PC-9 (cell line): ENCODE measurements at regions of chr3 and their contacts with region 1.

Region 1: GRCh38 chr3:190384241-190384863 is 3.6 kb upstream of the CLDN16 start:
- DNase-seq: peak; percentile 64 to 67
- H3K4me3 ChIP-seq: no peak overlapping the region
- H3K27ac ChIP-seq: peak overlapping the region; percentile 96
- H3K4me1 ChIP-seq: peaks cover 52% of the 10 kb centered on the region
- H3K27me3 ChIP-seq: no peaks in the 10 kb centered on the region
- CTCF ChIP-seq: peak; percentile 49; the same call in 1 of the 2 replicates

Region 2: GRCh38 chr3:189967254-189967865 is 417.0 kb before region 1 on chr3:
- CTCF ChIA-PET with region 1: no interaction called
- POLR2A ChIA-PET with region 1: no interaction called
- intact Hi-C with region 1: loop called (anchors 1 kb)
- DNase-seq: peak; percentile 37 to 59
- H3K4me3 ChIP-seq: no peak overlapping the region
- H3K27ac ChIP-seq: no peak overlapping the region
- H3K4me1 ChIP-seq: no peaks in the 10 kb centered on the region
- H3K27me3 ChIP-seq: no peaks in the 10 kb centered on the region
- CTCF ChIP-seq: peak; percentile 98

Region 3: DNA sequence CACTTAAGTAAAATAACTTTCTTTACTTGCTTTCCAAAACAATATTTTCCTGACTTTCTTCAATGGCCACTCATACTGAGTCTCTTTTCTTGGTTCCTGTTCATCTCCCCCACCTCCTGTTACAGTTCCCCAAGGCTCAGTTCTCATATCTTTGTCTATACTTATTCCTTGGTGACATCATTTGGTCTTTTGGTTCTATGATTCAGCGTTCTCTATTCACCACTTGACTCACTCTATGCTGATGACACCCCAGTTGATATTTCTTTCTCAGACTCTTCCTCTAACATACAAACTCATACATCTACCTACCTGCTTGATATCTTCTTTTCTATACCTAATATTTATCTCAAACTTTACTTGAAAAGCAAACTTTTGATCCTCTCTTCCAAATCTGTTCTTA is 178.6 kb before region 1 on chr3:
- CTCF ChIA-PET with region 1: no interaction called
- POLR2A ChIA-PET with region 1: no interaction called
- intact Hi-C with region 1: loop called (anchors 1 kb)
- DNase-seq: no peak
- H3K4me3 ChIP-seq: no peak overlapping the region
- H3K27ac ChIP-seq: no peak overlapping the region
- H3K4me1 ChIP-seq: peaks cover 4% of the 10 kb centered on the region; the same call in 1 of the 2 replicates
- H3K27me3 ChIP-seq: no peaks in the 10 kb centered on the region
- CTCF ChIP-seq: no peak

Region 4: DNA sequence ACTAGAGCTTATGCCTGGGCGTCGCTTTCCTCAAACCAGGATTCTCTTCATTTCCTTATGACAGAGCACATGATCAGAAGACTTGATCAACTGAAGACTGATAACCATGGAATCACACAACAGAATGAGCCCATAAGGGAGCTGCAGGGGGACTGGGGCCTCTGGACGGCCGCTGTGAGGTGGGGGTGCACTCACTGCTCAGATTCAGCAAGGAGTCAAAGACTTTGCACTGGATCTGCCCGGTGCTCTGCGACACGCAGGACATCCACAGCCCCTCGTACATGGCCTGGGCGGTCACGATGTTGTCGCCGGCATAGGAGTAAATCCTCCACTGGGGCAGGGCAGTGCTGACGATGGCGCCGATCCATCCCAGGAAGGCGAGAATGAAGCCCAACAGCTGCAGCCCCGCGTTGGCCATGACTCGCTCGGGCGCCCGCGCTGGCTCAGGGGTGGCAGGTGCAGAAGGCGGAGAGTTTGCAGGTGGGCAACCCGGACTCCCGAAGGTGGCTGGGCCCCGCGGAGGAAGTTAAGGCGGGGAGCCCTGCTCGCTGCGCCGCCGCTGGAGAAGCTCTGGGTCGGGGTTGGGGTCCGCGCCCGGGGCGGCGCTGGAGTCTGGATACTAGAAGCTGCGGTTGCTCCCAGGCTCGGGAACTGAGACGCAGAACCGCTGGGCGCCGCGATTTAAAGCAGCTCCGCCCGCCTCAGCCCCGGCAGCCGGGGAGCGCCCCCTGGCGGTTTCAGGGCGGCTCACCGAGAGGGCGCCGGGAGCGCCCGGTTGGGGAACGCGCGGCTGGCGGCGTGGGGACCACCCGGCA is 62.4 kb before region 1 on chr3 and contains the start of gene CLDN1:
- CTCF ChIA-PET with region 1: interaction called, 9 read pairs
- POLR2A ChIA-PET with region 1: no interaction called
- intact Hi-C with region 1: loop called (anchors 1 kb)
- DNase-seq: peak; percentile 64 to 90
- H3K4me3 ChIP-seq: peak within 1 kb of the TSS; percentile 85
- H3K27ac ChIP-seq: peak within 1 kb of the TSS; percentile 62
- H3K4me1 ChIP-seq: peaks cover 39% of the 10 kb centered on the region
- H3K27me3 ChIP-seq: no peaks in the 10 kb centered on the region
- CTCF ChIP-seq: peak; percentile 98
- total RNA-seq, gene CLDN1: 25.9 and 27.1 TPM in 2 replicates

Region 5: DNA sequence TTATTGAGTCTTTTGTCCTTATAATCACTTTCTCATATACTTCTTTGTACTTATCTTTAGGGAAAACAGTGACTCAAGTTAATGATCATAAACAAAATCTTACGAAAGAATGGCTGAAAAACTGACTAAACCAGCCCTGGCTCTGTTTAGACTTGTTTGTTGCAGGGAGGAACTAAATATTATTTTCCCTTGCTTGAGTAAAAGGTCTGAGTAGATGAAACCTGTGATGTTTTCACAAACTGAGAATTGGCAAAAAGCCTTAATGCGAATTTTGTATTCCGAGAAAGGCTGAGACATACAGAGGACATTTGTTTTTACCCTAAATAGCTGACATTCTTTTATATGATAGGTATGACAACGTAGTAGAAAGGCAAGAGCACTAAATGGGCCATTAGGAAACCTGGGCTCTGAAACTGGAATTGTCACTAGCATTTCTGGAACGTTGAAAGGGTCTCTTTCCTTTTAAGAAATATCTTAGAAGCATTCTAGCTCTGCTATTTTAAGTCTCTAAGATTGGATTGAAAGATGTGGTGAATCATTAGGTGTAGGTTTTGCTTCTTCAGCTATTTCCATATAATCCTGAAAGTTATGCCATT is 14.6 kb before region 1 on chr3:
- CTCF ChIA-PET with region 1: interaction called, 4 read pairs
- POLR2A ChIA-PET with region 1: no interaction called
- intact Hi-C with region 1: loop called (anchors 1 kb)
- DNase-seq: peak; percentile 27 to 86
- H3K4me3 ChIP-seq: peak overlapping the region; percentile 5; the same call in 1 of the 2 replicates
- H3K27ac ChIP-seq: peak overlapping the region; percentile 80
- H3K4me1 ChIP-seq: peaks cover 45% of the 10 kb centered on the region
- H3K27me3 ChIP-seq: no peaks in the 10 kb centered on the region
- CTCF ChIP-seq: no peak

Region 6: DNA sequence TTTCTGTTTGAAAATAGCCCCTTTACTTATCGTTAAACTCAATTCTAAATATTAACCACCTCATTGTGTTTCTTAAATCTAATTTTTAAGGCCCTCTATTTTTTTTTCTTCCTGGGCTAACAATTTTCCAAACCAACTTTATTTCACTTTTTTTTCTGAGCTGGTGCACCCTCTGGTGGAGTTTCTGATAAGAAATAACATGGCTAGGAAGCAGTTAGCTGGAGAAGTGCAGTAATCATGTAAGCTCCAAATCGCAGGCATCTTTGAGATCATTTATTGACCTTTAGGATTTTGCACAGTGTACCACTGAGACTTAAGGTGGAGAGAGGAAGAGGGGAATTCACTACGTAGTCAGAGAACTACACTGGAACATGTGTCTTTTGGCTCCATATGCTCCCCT is 58.9 kb after region 1 on chr3:
- CTCF ChIA-PET with region 1: no interaction called
- POLR2A ChIA-PET with region 1: no interaction called
- intact Hi-C with region 1: loop called (anchors 1 kb)
- DNase-seq: no peak
- H3K4me3 ChIP-seq: no peak overlapping the region
- H3K27ac ChIP-seq: no peak overlapping the region
- H3K4me1 ChIP-seq: peaks cover 17% of the 10 kb centered on the region
- H3K27me3 ChIP-seq: no peaks in the 10 kb centered on the region
- CTCF ChIP-seq: peak; percentile 72

Region 7: DNA sequence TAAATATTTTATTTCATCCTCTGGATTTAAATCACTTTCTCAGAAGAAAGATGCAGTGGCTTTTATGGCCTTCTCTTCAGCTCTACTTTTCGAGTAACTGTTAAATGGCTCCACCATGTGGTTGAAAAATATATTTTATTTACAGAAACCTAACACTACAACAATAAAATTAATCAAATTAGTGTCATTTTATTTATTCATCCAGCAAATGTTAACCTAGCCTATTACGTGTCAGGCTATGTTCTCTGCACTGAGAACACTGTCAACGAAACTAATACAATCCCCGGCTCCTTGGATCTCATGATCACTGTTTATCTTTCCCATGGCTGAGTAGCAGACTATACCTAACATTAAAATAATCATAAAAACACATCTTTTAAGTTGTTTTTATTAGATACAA is 666.7 kb after region 1 on chr3:
- CTCF ChIA-PET with region 1: no interaction called
- POLR2A ChIA-PET with region 1: no interaction called
- intact Hi-C with region 1: loop called (anchors 1 kb)
- DNase-seq: peak in 1 of 2 experiments; percentile 58
- H3K4me3 ChIP-seq: no peak overlapping the region
- H3K27ac ChIP-seq: no peak overlapping the region
- H3K4me1 ChIP-seq: no peaks in the 10 kb centered on the region
- H3K27me3 ChIP-seq: no peaks in the 10 kb centered on the region
- CTCF ChIP-seq: peak; percentile 87